ENCODE measurements at regions of chr22 and their contacts with region 1.

Region 1: DNA sequence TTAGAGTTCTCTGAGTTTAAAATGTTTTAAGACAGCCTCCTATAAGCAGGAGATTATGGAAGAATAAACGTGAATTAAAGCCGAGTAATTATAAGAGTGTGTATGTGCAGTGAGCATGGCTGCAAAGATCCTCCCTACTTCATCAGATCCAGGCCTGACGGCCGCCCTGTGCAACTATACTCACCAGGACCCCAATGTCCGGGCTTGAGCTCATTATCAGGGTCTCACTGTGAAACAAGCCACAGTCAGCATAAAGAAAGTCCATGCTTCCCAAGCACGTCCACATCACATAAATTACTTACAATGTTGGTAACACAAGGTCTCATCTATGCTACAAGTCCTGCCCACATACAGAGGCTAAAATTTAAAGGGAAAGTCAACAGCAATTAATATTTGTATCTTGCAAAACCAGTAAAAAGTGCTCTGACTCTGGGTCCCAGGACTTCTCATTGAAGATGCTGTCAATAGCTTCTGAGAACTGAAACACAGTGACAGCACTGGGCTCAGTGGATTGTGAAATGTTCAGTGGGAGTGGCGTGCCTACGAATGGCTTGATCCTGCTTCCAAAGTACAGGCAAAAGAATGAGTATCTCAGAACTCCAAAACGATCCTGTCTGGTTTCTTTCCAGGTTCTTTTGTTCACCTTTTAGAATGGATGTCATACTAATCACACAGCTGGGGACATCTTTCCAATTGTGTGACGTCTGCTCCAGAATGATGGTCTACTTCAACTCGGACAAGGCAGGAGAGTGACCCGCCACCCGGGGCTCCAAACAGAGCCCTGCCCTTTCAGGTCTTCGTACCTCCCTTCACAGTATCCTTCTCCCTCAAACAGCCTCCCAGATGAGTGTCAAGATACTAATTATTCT is 72.1 kb upstream of the ARFGAP3 start:
- DNase-seq: no peak
- ATAC-seq: no peak
- H3K4me3 ChIP-seq: no peak overlapping the region
- H3K4me3 Mint-ChIP-seq: no peak overlapping the region
- H3K27ac ChIP-seq: peak overlapping the region; percentile 13
- H3K27ac Mint-ChIP-seq: no peak overlapping the region
- H3K4me1 ChIP-seq: peaks cover 59% of the 10 kb centered on the region
- H3K4me1 Mint-ChIP-seq: peaks cover 64 to 74% of the 10 kb centered on the region in 2 donors
- H3K27me3 ChIP-seq: no peaks in the 10 kb centered on the region
- H3K27me3 Mint-ChIP-seq: peaks cover 0 to 5% of the 10 kb centered on the region in 2 donors
- CTCF ChIP-seq: no peak

Region 2: GRCh38 chr22:42895087-42895486 is 34.1 kb before region 1 on chr22:
- intact Hi-C with region 1: loop called (anchors 2 kb)
- DNase-seq: peak; percentile 26 to 71
- ATAC-seq: peak; percentile 76 to 82 (median 80)
- H3K4me3 ChIP-seq: no peak overlapping the region
- H3K4me3 Mint-ChIP-seq: peak overlapping the region; percentile 77
- H3K27ac ChIP-seq: peak overlapping the region; percentile 86
- H3K27ac Mint-ChIP-seq: peak overlapping the region; percentile 91 to 92
- H3K4me1 ChIP-seq: peaks cover 73% of the 10 kb centered on the region
- H3K4me1 Mint-ChIP-seq: peaks cover 46 to 65% of the 10 kb centered on the region in 2 donors
- H3K27me3 ChIP-seq: no peaks in the 10 kb centered on the region
- H3K27me3 Mint-ChIP-seq: no peaks in the 10 kb centered on the region
- CTCF ChIP-seq: no peak

Region 3: GRCh38 chr22:42919199-42919598 is 10.0 kb before region 1 on chr22:
- intact Hi-C with region 1: no loop called
- DNase-seq: no peak
- ATAC-seq: peak; percentile 65 to 74 (median 68)
- H3K4me3 ChIP-seq: no peak overlapping the region
- H3K4me3 Mint-ChIP-seq: no peak overlapping the region
- H3K27ac ChIP-seq: no peak overlapping the region
- H3K27ac Mint-ChIP-seq: no peak overlapping the region
- H3K4me1 ChIP-seq: peaks cover 40% of the 10 kb centered on the region
- H3K4me1 Mint-ChIP-seq: peaks cover 38 to 45% of the 10 kb centered on the region in 2 donors
- H3K27me3 ChIP-seq: no peaks in the 10 kb centered on the region
- H3K27me3 Mint-ChIP-seq: no peaks in the 10 kb centered on the region
- CTCF ChIP-seq: no peak

Region 4: GRCh38 chr22:42959576-42960509 is 30.6 kb after region 1 on chr22:
- intact Hi-C with region 1: loop called (anchors 5 kb)
- DNase-seq: no peak
- ATAC-seq: peak in 1 of 3 donors; percentile 45
- H3K4me3 ChIP-seq: no peak overlapping the region
- H3K4me3 Mint-ChIP-seq: peak overlapping the region; percentile 10
- H3K27ac ChIP-seq: no peak overlapping the region
- H3K27ac Mint-ChIP-seq: peak overlapping the region; percentile 29 to 68
- H3K4me1 ChIP-seq: peaks cover 25% of the 10 kb centered on the region
- H3K4me1 Mint-ChIP-seq: peaks cover 59 to 62% of the 10 kb centered on the region in 2 donors
- H3K27me3 ChIP-seq: no peaks in the 10 kb centered on the region
- H3K27me3 Mint-ChIP-seq: no peaks in the 10 kb centered on the region
- CTCF ChIP-seq: no peak

Measured in natural killer cell (primary cell).